Vagina (tissue), 2 donors: ENCODE measurements at regions of chr3 and their contacts with region 1.

Region 1: GRCh38 chr3:101676765-101677435 is at the start of gene ZBTB11:
- DNase-seq: peak; percentile 99
- H3K4me3 ChIP-seq: peak within 1 kb of the TSS; percentile 76 to 94
- H3K27ac ChIP-seq: peak within 1 kb of the TSS; percentile 94
- H3K4me1 ChIP-seq: peaks cover 44% of the 10 kb centered on the region
- H3K27me3 ChIP-seq: no peaks in the 10 kb centered on the region
- CTCF ChIP-seq: peak in 2 of 3 experiments; percentile 20 to 40
- POLR2A ChIP-seq: peak in 1 of 2 donors; percentile 91
- total RNA-seq, gene ZBTB11: 27.5 TPM

Region 2: DNA sequence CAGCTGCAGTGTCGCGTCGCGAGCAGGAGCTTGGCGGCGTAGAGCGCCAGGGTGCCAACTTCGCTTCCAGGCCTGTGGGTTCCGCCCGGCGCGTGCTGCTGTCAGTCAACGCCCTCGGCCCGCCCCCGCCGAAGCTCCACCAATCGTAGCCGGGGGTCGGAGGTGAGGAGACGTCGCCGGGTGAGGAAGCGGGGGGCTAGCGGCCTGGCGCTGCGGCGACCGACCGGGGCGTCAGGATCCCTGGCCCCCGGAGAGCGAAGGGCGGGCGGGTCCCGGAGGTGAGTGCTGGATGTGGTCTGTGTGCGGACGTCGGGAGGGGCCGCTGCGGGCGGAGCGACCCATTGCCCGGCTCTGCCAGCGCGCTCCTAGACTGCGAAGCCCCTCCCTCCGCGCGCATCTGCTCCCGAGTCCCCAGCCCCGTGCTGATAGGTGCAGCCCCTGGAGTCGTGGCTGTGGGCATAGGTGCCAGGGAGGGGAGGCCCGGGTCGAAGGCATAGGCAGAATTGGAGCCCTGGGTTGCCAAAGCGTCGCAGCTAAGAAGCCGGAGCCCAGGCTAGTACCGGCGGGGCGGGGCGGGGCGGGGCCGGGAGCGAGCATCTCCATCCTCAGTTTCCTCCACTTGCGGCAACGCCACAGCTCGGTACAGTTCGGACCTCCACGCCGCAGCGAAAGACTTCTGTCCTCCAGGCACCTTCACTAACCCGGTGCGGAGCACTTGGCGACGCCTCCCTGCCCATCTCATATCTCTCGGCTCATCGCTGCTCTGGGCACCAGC is 102.3 kb after region 1 on chr3 and contains the start of gene NXPE3:
- intact Hi-C with region 1: loop called (anchors 2 kb)
- DNase-seq: peak in 1 of 2 donors; percentile 89
- H3K4me3 ChIP-seq: peak within 1 kb of the TSS; percentile 72 to 82
- H3K27ac ChIP-seq: peak within 1 kb of the TSS; percentile 80
- H3K4me1 ChIP-seq: peaks cover 25% of the 10 kb centered on the region
- H3K27me3 ChIP-seq: no peaks in the 10 kb centered on the region
- CTCF ChIP-seq: no peak
- POLR2A ChIP-seq: no peak
- total RNA-seq, gene NXPE3: 13.3 TPM